Left ventricle myocardium inferior (tissue), 1 donor: ENCODE measurements at regions of chr7 and their contacts with region 1.

Region 1: GRCh38 chr7:90155206-90155605 is 937 bp downstream of the STEAP1 start:
- DNase-seq: no peak
- H3K4me3 ChIP-seq: no peak overlapping the region
- H3K27ac ChIP-seq: no peak overlapping the region
- H3K4me1 ChIP-seq: peaks cover 8% of the 10 kb centered on the region
- H3K27me3 ChIP-seq: no peaks in the 10 kb centered on the region
- CTCF ChIP-seq: no peak

Region 2: GRCh38 chr7:90262438-90262837 is 107.2 kb after region 1 on chr7:
- intact Hi-C with region 1: loop called (anchors 5 kb)
- DNase-seq: no peak
- H3K4me3 ChIP-seq: no peak overlapping the region
- H3K27ac ChIP-seq: no peak overlapping the region
- H3K4me1 ChIP-seq: no peaks in the 10 kb centered on the region
- H3K27me3 ChIP-seq: no peaks in the 10 kb centered on the region
- CTCF ChIP-seq: peak; percentile 60

Region 3: DNA sequence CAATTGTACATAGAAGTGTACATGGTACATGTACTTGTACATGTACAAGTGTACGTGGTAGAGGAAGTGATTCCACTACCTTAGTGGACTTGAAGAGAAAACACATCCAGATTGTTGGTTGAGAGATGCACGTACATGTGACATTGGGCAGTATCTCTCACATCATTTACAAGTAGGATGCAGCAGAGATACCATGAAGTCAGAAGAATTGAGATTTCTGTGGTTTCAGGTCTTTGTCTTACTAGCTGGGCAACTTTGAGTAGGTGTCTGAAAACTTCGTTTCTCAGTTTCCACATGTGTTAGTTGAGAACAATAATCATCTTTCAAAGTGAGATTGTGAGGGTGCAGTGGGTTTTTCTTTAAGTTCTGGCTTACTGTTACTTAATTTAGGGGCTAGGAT is 269.5 kb after region 1 on chr7:
- intact Hi-C with region 1: loop called (anchors 5 kb)
- DNase-seq: no peak
- H3K4me3 ChIP-seq: no peak overlapping the region
- H3K27ac ChIP-seq: no peak overlapping the region
- H3K4me1 ChIP-seq: peaks cover 16% of the 10 kb centered on the region
- H3K27me3 ChIP-seq: no peaks in the 10 kb centered on the region
- CTCF ChIP-seq: no peak